ENCODE measurements at regions of chr5 and their contacts with region 1.

Region 1: GRCh38 chr5:159987031-159987674 is 21.8 kb upstream of the TTC1 start:
- DNase-seq: peak; percentile 89
- ATAC-seq: peak; percentile 98
- H3K4me3 ChIP-seq: peak overlapping the region; percentile 69
- H3K27ac ChIP-seq: 0 out of 2 replicates have a peak overlapping the region, but pooled peaks have one; percentile 12
- H3K4me1 ChIP-seq: peaks cover 10% of the 10 kb centered on the region
- H3K27me3 ChIP-seq: no peaks in the 10 kb centered on the region
- CTCF ChIP-seq: peak; percentile 91

Region 2: DNA sequence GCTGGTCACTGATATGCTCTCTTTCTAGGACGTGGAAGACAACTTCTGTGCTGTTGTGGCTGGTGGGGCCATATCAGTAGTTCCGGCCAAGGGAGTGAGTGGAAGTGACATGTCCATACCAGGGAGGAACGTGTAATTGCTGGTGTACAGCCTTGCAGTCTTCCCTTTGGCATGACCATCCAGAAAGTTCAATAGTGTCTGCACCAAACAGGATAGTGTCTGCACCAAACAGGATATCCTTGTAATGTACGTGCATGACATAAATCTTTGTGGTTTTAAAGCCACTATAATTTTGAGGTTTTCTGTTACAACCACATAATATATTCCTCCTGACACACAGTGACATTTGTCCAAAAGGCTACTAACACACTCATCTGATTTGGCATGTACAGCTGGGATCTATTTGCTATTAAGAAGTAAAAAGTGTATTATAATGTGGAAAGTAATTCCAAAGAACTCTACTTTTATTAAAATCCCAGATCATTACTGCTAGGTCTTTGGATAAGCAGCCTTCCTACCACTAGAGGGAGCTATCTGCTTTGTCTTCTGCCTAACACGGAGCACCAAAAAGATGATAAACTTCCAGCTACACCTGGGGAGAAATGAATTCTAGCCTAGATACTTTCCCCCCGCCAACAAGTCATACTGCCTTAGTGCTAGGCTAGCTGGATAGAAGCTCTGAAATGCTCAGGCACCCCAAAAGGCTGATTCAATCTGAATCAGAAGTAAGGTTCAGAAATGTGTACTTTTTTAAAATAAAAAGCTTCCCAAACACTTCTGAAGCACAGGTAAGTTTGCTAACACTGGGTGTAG is 830.5 kb before region 1 on chr5:
- CTCF ChIA-PET with region 1: no interaction called
- POLR2A ChIA-PET with region 1: no interaction called
- intact Hi-C with region 1: loop called (anchors 5 kb)
- DNase-seq: peak; percentile 73
- ATAC-seq: peak; percentile 85
- H3K4me3 ChIP-seq: no peak overlapping the region
- H3K27ac ChIP-seq: no peak overlapping the region
- H3K4me1 ChIP-seq: no peaks in the 10 kb centered on the region
- H3K27me3 ChIP-seq: no peaks in the 10 kb centered on the region
- CTCF ChIP-seq: peak; percentile 80

Region 3: DNA sequence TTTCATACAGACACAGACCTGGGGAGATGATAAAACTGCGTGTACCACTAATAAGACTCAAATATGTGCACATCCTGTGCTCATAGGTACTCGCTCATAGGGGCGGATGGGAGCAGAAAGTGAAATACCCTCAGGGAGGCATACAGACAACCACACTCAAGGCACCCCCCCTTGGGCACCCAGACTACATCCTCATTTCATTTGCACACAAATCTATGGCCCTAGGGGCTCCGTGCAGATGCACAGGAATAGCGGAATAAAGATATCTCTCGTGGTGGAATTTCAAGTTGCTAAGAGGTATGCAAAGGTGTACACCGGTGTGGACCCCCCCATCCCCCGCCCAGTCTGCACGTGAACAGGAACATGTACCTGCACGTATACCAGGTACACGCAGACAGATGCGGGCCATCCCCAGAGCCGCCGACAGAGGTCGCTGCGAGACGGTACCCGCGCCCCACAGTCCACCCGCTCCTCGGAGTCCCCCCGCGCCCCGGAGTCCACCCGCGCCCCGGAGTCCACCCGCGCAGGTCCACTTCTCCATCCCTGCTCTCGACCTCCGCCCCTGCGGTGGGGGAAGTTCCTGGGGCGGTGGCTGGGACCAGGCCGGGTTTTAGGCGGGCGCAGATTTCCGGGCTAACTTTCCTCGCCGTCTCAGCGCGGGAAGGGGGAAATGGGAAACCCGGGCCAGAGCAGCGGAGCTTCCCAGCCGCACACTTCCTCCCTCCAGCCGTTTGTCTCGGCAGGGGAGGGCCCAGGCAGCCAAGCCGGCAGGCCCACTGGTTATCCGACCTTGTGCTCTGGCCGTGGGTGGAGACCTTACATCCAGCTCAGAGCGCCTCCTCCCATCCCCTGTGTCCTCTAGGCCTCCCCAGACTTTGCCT is 655.8 kb before region 1 on chr5:
- CTCF ChIA-PET with region 1: no interaction called
- POLR2A ChIA-PET with region 1: no interaction called
- intact Hi-C with region 1: loop called (anchors 1 kb)
- DNase-seq: peak; percentile 58
- ATAC-seq: peak; percentile 87
- H3K4me3 ChIP-seq: peak overlapping the region; percentile 72
- H3K27ac ChIP-seq: 0 out of 2 replicates have a peak overlapping the region, but pooled peaks have one; percentile 19
- H3K4me1 ChIP-seq: peaks cover 3% of the 10 kb centered on the region; the same call in 1 of the 2 replicates
- H3K27me3 ChIP-seq: no peaks in the 10 kb centered on the region
- CTCF ChIP-seq: peak; percentile 65

Region 4: GRCh38 chr5:159515909-159516415 is 471.2 kb before region 1 on chr5:
- CTCF ChIA-PET with region 1: no interaction called
- POLR2A ChIA-PET with region 1: no interaction called
- intact Hi-C with region 1: loop called (anchors 5 kb)
- DNase-seq: peak; percentile 75
- ATAC-seq: no peak
- H3K4me3 ChIP-seq: no peak overlapping the region
- H3K27ac ChIP-seq: no peak overlapping the region
- H3K4me1 ChIP-seq: peaks cover 45% of the 10 kb centered on the region
- H3K27me3 ChIP-seq: no peaks in the 10 kb centered on the region
- CTCF ChIP-seq: peak; percentile 80

Region 5: DNA sequence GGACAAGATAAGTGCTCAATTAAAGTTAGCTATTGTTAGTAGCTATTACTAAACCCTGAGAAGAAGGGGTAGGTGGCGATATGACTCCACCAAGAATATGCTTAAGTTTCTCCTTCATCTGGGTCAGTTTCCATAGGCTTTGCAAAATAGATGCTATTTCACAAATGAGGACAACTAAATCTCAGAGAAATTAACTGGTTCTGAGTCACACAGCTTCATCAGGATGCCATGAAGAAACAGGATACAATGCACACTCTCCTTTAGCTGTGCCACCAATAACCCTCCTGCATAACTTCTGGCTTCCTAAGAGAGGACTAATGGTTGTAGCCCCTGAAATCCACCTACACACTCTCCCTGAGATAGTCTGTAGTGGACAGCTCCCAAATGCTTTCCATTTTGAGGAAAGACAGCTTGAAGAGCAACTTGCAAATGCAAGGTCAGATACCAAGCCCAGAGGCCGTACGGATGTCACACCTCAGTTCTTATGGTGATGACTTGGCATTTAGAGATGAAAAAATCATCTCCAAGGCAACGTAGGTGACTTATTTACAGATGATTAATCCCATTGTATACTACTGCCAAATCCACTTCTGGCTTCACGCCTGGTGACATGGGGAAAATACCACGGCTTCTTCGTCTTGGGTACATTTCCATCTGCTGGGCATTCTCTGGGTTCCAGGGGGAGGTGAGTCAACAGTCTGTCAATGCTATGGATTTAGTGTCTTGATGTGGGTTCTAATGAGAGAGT is 405.5 kb before region 1 on chr5:
- CTCF ChIA-PET with region 1: interaction called, 6 read pairs
- POLR2A ChIA-PET with region 1: no interaction called
- intact Hi-C with region 1: loop called (anchors 5 kb)
- DNase-seq: peak; percentile 95
- ATAC-seq: peak; percentile 73
- H3K4me3 ChIP-seq: no peak overlapping the region
- H3K27ac ChIP-seq: peak overlapping the region; percentile 80
- H3K4me1 ChIP-seq: peaks cover 31% of the 10 kb centered on the region
- H3K27me3 ChIP-seq: no peaks in the 10 kb centered on the region
- CTCF ChIP-seq: peak; percentile 26; the same call in 1 of the 2 replicates

Region 6: GRCh38 chr5:159915904-159916840 is 71.0 kb before region 1 on chr5 and contains the start of gene ADRA1B:
- CTCF ChIA-PET with region 1: interaction called, 13 read pairs
- POLR2A ChIA-PET with region 1: no interaction called
- intact Hi-C with region 1: no loop called
- DNase-seq: peak; percentile 68
- ATAC-seq: peak; percentile 90
- H3K4me3 ChIP-seq: peak within 1 kb of the TSS; percentile 68
- H3K27ac ChIP-seq: no peak within 1 kb of the TSS
- H3K4me1 ChIP-seq: peaks cover 34% of the 10 kb centered on the region
- H3K27me3 ChIP-seq: no peaks in the 10 kb centered on the region
- CTCF ChIP-seq: peak; percentile 53
- total RNA-seq, gene ADRA1B: 0.29 and 0.40 TPM in 2 replicates

Region 7: DNA sequence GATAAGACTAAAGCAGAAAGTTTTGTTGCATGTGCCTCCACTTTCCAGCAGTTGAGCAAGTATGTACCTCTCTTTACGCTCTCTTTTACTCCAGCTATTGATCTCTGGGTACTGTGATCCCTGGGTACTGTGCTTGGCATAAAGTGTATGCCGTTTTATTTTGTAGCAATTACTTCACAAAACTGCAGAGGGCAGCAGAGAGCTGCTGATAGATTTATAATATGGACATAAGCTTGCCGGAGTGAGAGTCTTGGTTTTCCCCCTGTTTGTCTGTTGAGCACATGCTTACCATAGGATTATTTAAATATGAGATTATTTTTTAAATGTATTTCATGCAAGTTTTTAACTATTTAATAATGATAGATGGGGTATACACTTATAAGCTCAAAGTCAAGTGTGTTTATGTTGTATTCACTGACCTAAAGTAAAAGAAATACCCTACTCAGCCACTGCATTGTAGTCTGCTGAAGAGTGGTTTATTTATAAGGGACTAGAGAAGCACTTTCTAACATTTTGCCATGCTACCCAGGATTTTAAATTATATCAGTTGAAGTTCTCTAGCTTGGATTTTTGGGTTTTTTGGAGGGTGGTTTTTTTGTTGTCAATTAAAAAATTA is 34.8 kb after region 1 on chr5:
- CTCF ChIA-PET with region 1: no interaction called
- POLR2A ChIA-PET with region 1: interaction called, 24 read pairs
- intact Hi-C with region 1: no loop called
- DNase-seq: peak; percentile 81
- ATAC-seq: peak; percentile 81
- H3K4me3 ChIP-seq: no peak overlapping the region
- H3K27ac ChIP-seq: no peak overlapping the region
- H3K4me1 ChIP-seq: no peaks in the 10 kb centered on the region
- H3K27me3 ChIP-seq: no peaks in the 10 kb centered on the region
- CTCF ChIP-seq: peak; percentile 85

Region 8: GRCh38 chr5:160119905-160120266 is 132.7 kb after region 1 on chr5:
- CTCF ChIA-PET with region 1: no interaction called
- POLR2A ChIA-PET with region 1: no interaction called
- intact Hi-C with region 1: no loop called
- DNase-seq: no peak
- ATAC-seq: no peak
- H3K4me3 ChIP-seq: peak overlapping the region; percentile 56
- H3K27ac ChIP-seq: no peak overlapping the region
- H3K4me1 ChIP-seq: peaks cover 6% of the 10 kb centered on the region; the same call in 1 of the 2 replicates
- H3K27me3 ChIP-seq: no peaks in the 10 kb centered on the region
- CTCF ChIP-seq: peak; percentile 25; the same call in 1 of the 2 replicates

Measured in PC-3 (cell line).